CD4-positive, alpha-beta memory T cell (primary cell): ENCODE measurements at regions of chr7 and their contacts with region 1.

Region 1: DNA sequence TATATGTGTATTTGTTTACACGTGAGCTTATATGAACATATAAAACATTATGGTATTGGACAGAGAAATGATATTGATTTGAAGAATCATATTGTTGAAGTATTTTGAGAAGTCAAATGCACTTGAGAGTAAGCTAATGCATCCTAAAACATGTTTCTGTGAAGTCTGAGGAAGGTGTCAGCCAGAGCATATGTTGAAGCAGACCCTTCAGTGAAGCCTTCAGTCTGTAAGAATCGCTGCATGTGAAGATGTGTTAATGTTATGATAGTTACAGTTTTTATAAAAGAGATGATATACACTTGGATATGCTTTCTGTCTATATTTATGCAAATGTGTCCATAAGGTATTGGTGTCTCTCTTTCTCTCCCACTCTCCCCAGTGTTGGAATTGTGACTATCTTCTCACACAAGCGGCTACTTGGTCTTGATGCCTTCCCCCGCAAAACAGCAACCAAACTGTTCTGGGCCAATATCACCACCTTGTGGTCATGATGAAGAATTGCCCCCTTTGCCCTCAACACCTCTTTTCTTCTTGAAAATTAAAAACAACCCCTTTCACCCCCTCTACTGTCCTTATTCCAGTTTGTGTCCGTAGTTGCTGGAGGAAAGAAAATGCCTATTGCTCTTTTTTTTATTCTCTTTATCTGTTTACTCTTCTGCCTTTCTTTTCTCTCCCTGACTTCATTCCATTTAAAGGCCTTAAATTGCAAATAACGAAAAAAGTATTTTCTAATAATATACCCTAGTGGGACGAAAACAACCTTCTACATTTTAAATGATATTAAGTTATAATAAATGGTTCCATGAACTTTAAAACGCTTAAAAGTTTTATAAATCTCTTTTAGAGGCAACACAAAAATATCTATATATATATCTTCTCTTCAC is 64.9 kb downstream of the IKZF1 start:
- DNase-seq: peak; percentile 70 to 81 (median 79)
- H3K4me3 ChIP-seq: no peak overlapping the region
- H3K4me3 Mint-ChIP-seq: peak overlapping the region; percentile 44 to 84 (median 67)
- H3K27ac ChIP-seq: peak overlapping the region; percentile 57
- H3K27ac Mint-ChIP-seq: peak overlapping the region in 6 of 7 donors; percentile 76 to 98 (median 92)
- H3K4me1 ChIP-seq: peaks cover 100% of the 10 kb centered on the region
- H3K4me1 Mint-ChIP-seq: peaks cover 78 to 97% (median 93%) of the 10 kb centered on the region in 4 donors
- H3K27me3 ChIP-seq: no peaks in the 10 kb centered on the region
- H3K27me3 Mint-ChIP-seq: no peaks in the 10 kb centered on the region

Region 2: GRCh38 chr7:50142425-50143017 is 226.9 kb before region 1 on chr7:
- CTCF ChIA-PET with region 1: interaction called, 17 read pairs
- POLR2A ChIA-PET with region 1: interaction called, 4 read pairs
- intact Hi-C with region 1: loop called (anchors 1 kb)
- DNase-seq: peak in 4 of 5 donors; percentile 57 to 63 (median 60)
- H3K4me3 ChIP-seq: no peak overlapping the region
- H3K4me3 Mint-ChIP-seq: peak overlapping the region; percentile 3 to 77 (median 49)
- H3K27ac ChIP-seq: no peak overlapping the region
- H3K27ac Mint-ChIP-seq: peak overlapping the region in 6 of 7 donors; percentile 0 to 93 (median 36)
- H3K4me1 ChIP-seq: peaks cover 26% of the 10 kb centered on the region
- H3K4me1 Mint-ChIP-seq: peaks cover 11 to 25% (median 18%) of the 10 kb centered on the region in 4 donors
- H3K27me3 ChIP-seq: no peaks in the 10 kb centered on the region
- H3K27me3 Mint-ChIP-seq: peaks cover 0 to 2% of the 10 kb centered on the region in 2 donors

Region 3: GRCh38 chr7:50229964-50230363 is 139.4 kb before region 1 on chr7:
- CTCF ChIA-PET with region 1: interaction called, 19 read pairs
- POLR2A ChIA-PET with region 1: interaction called, 20 read pairs
- intact Hi-C with region 1: no loop called
- DNase-seq: no peak
- H3K4me3 ChIP-seq: no peak overlapping the region
- H3K4me3 Mint-ChIP-seq: no peak overlapping the region
- H3K27ac ChIP-seq: no peak overlapping the region
- H3K27ac Mint-ChIP-seq: no peak overlapping the region
- H3K4me1 ChIP-seq: peaks cover 38% of the 10 kb centered on the region
- H3K4me1 Mint-ChIP-seq: peaks cover 31 to 42% (median 36%) of the 10 kb centered on the region in 4 donors
- H3K27me3 ChIP-seq: no peaks in the 10 kb centered on the region
- H3K27me3 Mint-ChIP-seq: no peaks in the 10 kb centered on the region

Region 4: GRCh38 chr7:50304158-50304910 is 65.1 kb before region 1 on chr7 and contains the start of gene IKZF1:
- CTCF ChIA-PET with region 1: interaction called, 336 read pairs
- POLR2A ChIA-PET with region 1: interaction called, 2,673 read pairs
- intact Hi-C with region 1: loop called (anchors 1 kb)
- DNase-seq: peak; percentile 53 to 66 (median 61)
- H3K4me3 ChIP-seq: peak within 1 kb of the TSS; percentile 86 to 96
- H3K4me3 Mint-ChIP-seq: peak within 1 kb of the TSS; percentile 97 to 100 (median 100)
- H3K27ac ChIP-seq: peak within 1 kb of the TSS; percentile 90
- H3K27ac Mint-ChIP-seq: peak within 1 kb of the TSS; percentile 90 to 99 (median 96)
- H3K4me1 ChIP-seq: peaks cover 53% of the 10 kb centered on the region
- H3K4me1 Mint-ChIP-seq: peaks cover 33 to 71% (median 47%) of the 10 kb centered on the region in 4 donors
- H3K27me3 ChIP-seq: no peaks in the 10 kb centered on the region
- H3K27me3 Mint-ChIP-seq: no peaks in the 10 kb centered on the region
- total RNA-seq, gene IKZF1: 474 to 479 TPM

Region 5: GRCh38 chr7:50335795-50336754 is 33.3 kb before region 1 on chr7:
- CTCF ChIA-PET with region 1: interaction called, 142 read pairs
- POLR2A ChIA-PET with region 1: interaction called, 2,673 read pairs
- intact Hi-C with region 1: loop called (anchors 2 kb)
- DNase-seq: peak; percentile 66 to 95 (median 70)
- H3K4me3 ChIP-seq: peak overlapping the region in 1 of 2 donors; percentile 23
- H3K4me3 Mint-ChIP-seq: peak overlapping the region in 1 of 8 donors; percentile 53
- H3K27ac ChIP-seq: peak overlapping the region; percentile 96
- H3K27ac Mint-ChIP-seq: no peak overlapping the region
- H3K4me1 ChIP-seq: peaks cover 100% of the 10 kb centered on the region
- H3K4me1 Mint-ChIP-seq: peaks cover 0 to 63% (median 39%) of the 10 kb centered on the region in 4 donors
- H3K27me3 ChIP-seq: no peaks in the 10 kb centered on the region
- H3K27me3 Mint-ChIP-seq: no peaks in the 10 kb centered on the region